ENCODE measurements at regions of chr18 and their contacts with region 1.

Region 1: GRCh38 chr18:54224379-54225014 is at the start of gene MBD2:
- DNase-seq: peak; percentile 92 to 93 (median 93)
- H3K4me3 ChIP-seq: peak within 1 kb of the TSS; percentile 30 to 61
- H3K4me3 Mint-ChIP-seq: peak within 1 kb of the TSS; percentile 92 to 99 (median 92)
- H3K27ac ChIP-seq: peak within 1 kb of the TSS; percentile 52
- H3K27ac Mint-ChIP-seq: peak within 1 kb of the TSS; percentile 95 to 98 (median 97)
- H3K4me1 ChIP-seq: peaks cover 44% of the 10 kb centered on the region
- H3K4me1 Mint-ChIP-seq: peaks cover 28 to 48% (median 39%) of the 10 kb centered on the region in 4 donors
- H3K27me3 ChIP-seq: no peaks in the 10 kb centered on the region
- H3K27me3 Mint-ChIP-seq: no peaks in the 10 kb centered on the region
- total RNA-seq, gene MBD2: 107 to 108 TPM

Region 2: GRCh38 chr18:54269893-54270844 is 45.7 kb after region 1 on chr18:
- CTCF ChIA-PET with region 1: interaction called, 88 read pairs
- POLR2A ChIA-PET with region 1: interaction called, 102 read pairs
- intact Hi-C with region 1: loop called (anchors 1 kb)
- DNase-seq: peak in 4 of 5 donors; percentile 37 to 45 (median 40)
- H3K4me3 ChIP-seq: peak overlapping the region; percentile 70 to 86
- H3K4me3 Mint-ChIP-seq: peak overlapping the region; percentile 90 to 98 (median 93)
- H3K27ac ChIP-seq: peak overlapping the region; percentile 77
- H3K27ac Mint-ChIP-seq: peak overlapping the region; percentile 88 to 100 (median 99)
- H3K4me1 ChIP-seq: peaks cover 18% of the 10 kb centered on the region
- H3K4me1 Mint-ChIP-seq: peaks cover 11 to 35% (median 19%) of the 10 kb centered on the region in 4 donors
- H3K27me3 ChIP-seq: no peaks in the 10 kb centered on the region
- H3K27me3 Mint-ChIP-seq: no peaks in the 10 kb centered on the region

Region 3: DNA sequence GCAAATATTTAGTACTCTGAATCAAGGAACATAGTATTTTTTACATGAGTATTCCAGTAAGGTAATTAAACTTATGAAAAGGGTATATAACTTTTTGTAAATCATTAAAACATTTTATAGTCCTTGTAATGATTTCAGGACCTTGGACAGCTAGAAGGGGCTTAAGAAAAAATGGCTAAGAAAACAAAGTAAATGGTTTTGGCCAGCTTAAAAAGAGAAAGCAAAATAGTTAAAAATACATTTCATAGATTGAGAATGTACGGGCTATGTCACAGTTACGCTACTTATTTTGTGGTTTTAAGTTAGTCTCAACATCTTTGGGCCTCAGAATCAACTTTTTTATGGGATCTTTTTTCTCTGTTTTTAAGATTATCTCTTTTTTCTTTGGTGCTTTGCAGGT is 71.6 kb after region 1 on chr18:
- CTCF ChIA-PET with region 1: no interaction called
- POLR2A ChIA-PET with region 1: no interaction called
- intact Hi-C with region 1: no loop called
- DNase-seq: no peak
- H3K4me3 ChIP-seq: no peak overlapping the region
- H3K4me3 Mint-ChIP-seq: no peak overlapping the region
- H3K27ac ChIP-seq: no peak overlapping the region
- H3K27ac Mint-ChIP-seq: no peak overlapping the region
- H3K4me1 ChIP-seq: no peaks in the 10 kb centered on the region
- H3K4me1 Mint-ChIP-seq: no peaks in the 10 kb centered on the region
- H3K27me3 ChIP-seq: no peaks in the 10 kb centered on the region
- H3K27me3 Mint-ChIP-seq: no peaks in the 10 kb centered on the region

Region 4: DNA sequence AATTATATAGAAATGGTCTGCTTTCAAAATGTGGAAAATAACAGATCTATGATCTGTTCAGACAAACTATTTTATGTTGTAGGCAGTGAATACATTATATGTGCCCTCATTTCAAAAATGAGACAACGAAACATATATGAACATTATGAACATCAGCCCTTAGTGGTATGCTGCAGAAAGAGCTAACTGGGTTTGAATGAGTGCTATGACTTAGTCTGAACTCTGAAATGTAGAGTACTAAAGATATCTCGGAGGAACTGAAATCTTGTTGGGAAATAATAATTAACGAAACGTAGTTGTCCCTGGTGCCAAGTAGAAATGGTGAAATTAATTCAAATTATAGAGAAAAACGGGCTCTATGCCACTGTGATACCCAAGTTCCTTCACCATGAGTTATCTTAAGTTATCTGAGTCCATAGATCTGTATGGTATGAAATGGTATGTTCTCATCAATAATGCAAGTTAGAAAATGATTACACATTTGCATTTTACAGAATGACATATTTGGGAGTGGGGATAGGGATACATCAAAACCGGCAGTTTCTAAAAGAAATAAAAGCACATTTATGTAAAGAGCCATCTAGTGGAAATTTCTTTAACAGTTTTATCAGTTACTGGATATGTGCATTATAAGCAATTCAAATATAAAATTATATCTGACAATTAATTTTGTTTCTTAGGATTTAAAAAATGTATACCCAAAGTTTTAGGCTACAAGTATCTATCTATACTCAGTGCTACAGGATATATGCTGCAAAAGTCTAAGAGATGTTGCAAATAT is 106.5 kb after region 1 on chr18:
- CTCF ChIA-PET with region 1: interaction called, 4 read pairs
- POLR2A ChIA-PET with region 1: no interaction called
- intact Hi-C with region 1: loop called (anchors 1 kb)
- DNase-seq: no peak
- H3K4me3 ChIP-seq: no peak overlapping the region
- H3K4me3 Mint-ChIP-seq: no peak overlapping the region
- H3K27ac ChIP-seq: no peak overlapping the region
- H3K27ac Mint-ChIP-seq: no peak overlapping the region
- H3K4me1 ChIP-seq: no peaks in the 10 kb centered on the region
- H3K4me1 Mint-ChIP-seq: no peaks in the 10 kb centered on the region
- H3K27me3 ChIP-seq: no peaks in the 10 kb centered on the region
- H3K27me3 Mint-ChIP-seq: peaks cover 2 to 8% of the 10 kb centered on the region in 2 donors

Region 5: DNA sequence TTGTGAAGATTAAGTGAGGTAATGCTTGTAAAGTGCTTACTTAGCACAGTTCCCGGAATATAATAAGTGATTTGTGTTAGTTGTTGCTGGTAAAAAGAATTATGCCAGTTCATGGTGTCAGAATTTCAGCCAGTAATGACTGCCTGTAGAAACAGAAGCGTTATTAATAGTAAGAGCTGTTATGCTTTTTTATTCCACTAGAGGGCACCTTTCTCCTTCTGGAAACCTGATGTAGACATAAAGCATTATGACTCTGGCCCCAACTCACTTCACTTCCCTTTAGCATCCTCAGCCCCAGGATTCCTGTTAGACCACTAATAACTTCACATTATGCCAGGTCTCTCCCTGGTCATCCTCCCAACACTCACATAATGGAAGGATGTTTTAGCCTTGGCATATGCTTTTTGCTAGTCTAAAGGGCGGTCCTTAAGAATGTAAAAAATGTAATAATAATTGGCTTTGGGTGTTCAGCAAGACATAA is 168.1 kb after region 1 on chr18:
- CTCF ChIA-PET with region 1: interaction called, 10 read pairs
- POLR2A ChIA-PET with region 1: interaction called, 4 read pairs
- intact Hi-C with region 1: loop called (anchors 1 kb)
- DNase-seq: peak in 4 of 5 donors; percentile 48 to 51 (median 48)
- H3K4me3 ChIP-seq: no peak overlapping the region
- H3K4me3 Mint-ChIP-seq: no peak overlapping the region
- H3K27ac ChIP-seq: no peak overlapping the region
- H3K27ac Mint-ChIP-seq: no peak overlapping the region
- H3K4me1 ChIP-seq: no peaks in the 10 kb centered on the region
- H3K4me1 Mint-ChIP-seq: peaks cover 0 to 12% (median 4%) of the 10 kb centered on the region in 4 donors
- H3K27me3 ChIP-seq: no peaks in the 10 kb centered on the region
- H3K27me3 Mint-ChIP-seq: peaks cover 2 to 6% of the 10 kb centered on the region in 2 donors

Region 6: GRCh38 chr18:54671291-54671881 is 446.9 kb after region 1 on chr18:
- CTCF ChIA-PET with region 1: no interaction called
- POLR2A ChIA-PET with region 1: no interaction called
- intact Hi-C with region 1: loop called (anchors 5 kb)
- DNase-seq: peak in 4 of 5 donors; percentile 14 to 30 (median 16)
- H3K4me3 ChIP-seq: no peak overlapping the region
- H3K4me3 Mint-ChIP-seq: no peak overlapping the region
- H3K27ac ChIP-seq: no peak overlapping the region
- H3K27ac Mint-ChIP-seq: no peak overlapping the region
- H3K4me1 ChIP-seq: no peaks in the 10 kb centered on the region
- H3K4me1 Mint-ChIP-seq: no peaks in the 10 kb centered on the region
- H3K27me3 ChIP-seq: no peaks in the 10 kb centered on the region
- H3K27me3 Mint-ChIP-seq: peaks cover 4% of the 10 kb centered on the region in 2 donors